A549 (cell line): ENCODE measurements at regions of chr5 and their contacts with region 1.

Region 1: GRCh38 chr5:43120720-43121564 is at the start of gene ZNF131:
- DNase-seq: peak; percentile 86 to 98
- ATAC-seq: peak; percentile 94 to 95
- H3K4me3 ChIP-seq: peak within 1 kb of the TSS; percentile 78
- H3K27ac ChIP-seq: peak within 1 kb of the TSS; percentile 96 to 97
- H3K4me1 ChIP-seq: peaks cover 20% of the 10 kb centered on the region; the same call in 2 of the 3 replicates
- CTCF ChIP-seq: no peak
- EP300 ChIP-seq: no peak
- POLR2A ChIP-seq: peak; percentile 80
- RAD21 ChIP-seq: no peak
- polyA plus RNA-seq, gene ZNF131: 37.5 and 47.9 TPM in 2 replicates

Region 2: GRCh38 chr5:42950440-42951292 is 170.3 kb before region 1 on chr5:
- CTCF ChIA-PET with region 1: no interaction called
- POLR2A ChIA-PET with region 1: interaction called, 16 read pairs
- DNase-seq: peak; percentile 97 to 99
- ATAC-seq: peak; percentile 93 to 94
- H3K4me3 ChIP-seq: peak overlapping the region; percentile 37
- H3K27ac ChIP-seq: peak overlapping the region; percentile 95 to 99
- H3K4me1 ChIP-seq: peaks cover 19% of the 10 kb centered on the region
- CTCF ChIP-seq: no peak
- EP300 ChIP-seq: peak; percentile 51 to 63; a peak in 2 of 5 replicates
- POLR2A ChIP-seq: no peak
- RAD21 ChIP-seq: 0 out of 5 replicates have a peak, but pooled peaks of 1 of the 2 experiments have one; percentile 27

Region 3: DNA sequence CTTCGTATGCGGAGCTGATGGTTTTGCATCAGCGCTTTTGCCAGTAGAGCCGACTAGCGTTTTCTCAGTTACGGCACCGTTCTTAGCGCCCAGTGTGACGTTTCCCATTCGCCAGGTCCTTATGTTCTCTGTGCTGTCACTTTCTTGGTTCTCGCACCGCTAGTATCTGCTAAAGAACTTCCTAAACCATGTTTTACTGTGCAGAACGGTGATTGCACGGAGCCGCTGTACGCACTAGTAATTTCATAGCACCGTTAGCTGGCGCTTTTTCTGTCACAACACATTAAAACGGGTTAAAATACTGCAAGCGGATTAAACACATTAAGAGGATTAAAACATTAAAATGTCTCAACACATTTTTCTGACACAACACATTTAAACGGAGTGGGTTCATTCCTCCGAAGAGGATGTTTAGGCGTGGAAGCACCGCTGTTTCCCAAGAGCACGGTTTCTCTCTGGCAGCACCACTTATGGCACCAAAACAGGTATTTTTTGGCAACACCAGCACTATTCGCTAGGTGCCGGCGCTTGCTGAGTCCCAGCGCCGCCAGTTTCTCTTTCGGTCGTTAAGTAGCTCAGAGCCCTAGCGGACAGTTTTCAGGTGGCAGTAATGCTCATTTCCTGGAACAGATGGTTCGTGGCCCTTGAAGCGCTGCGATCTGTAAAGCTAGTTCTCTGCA is 101.2 kb before region 1 on chr5:
- CTCF ChIA-PET with region 1: no interaction called
- POLR2A ChIA-PET with region 1: interaction called, 16 read pairs
- DNase-seq: peak; percentile 51 to 88
- ATAC-seq: peak; percentile 68
- H3K4me3 ChIP-seq: peak overlapping the region; percentile 55
- H3K27ac ChIP-seq: peak overlapping the region; percentile 90 to 96
- H3K4me1 ChIP-seq: peaks cover 24% of the 10 kb centered on the region
- CTCF ChIP-seq: no peak
- EP300 ChIP-seq: no peak
- POLR2A ChIP-seq: no peak
- RAD21 ChIP-seq: no peak

Region 4: GRCh38 chr5:43066799-43067741 is 53.9 kb before region 1 on chr5:
- CTCF ChIA-PET with region 1: no interaction called
- POLR2A ChIA-PET with region 1: interaction called, 14 read pairs
- DNase-seq: peak; percentile 59 to 93
- ATAC-seq: peak; percentile 69 to 78
- H3K4me3 ChIP-seq: peak overlapping the region; percentile 57
- H3K27ac ChIP-seq: peak overlapping the region; percentile 92 to 93
- H3K4me1 ChIP-seq: peaks cover 23% of the 10 kb centered on the region
- CTCF ChIP-seq: no peak
- EP300 ChIP-seq: no peak
- POLR2A ChIP-seq: no peak; the same call in none of the 2 replicates
- RAD21 ChIP-seq: no peak

Region 5: GRCh38 chr5:43140286-43140685 is 19.3 kb after region 1 on chr5:
- CTCF ChIA-PET with region 1: interaction called, 3 read pairs
- POLR2A ChIA-PET with region 1: interaction called, 10 read pairs
- DNase-seq: no peak
- ATAC-seq: no peak
- H3K4me3 ChIP-seq: no peak overlapping the region
- H3K27ac ChIP-seq: no peak overlapping the region
- H3K4me1 ChIP-seq: no peaks in the 10 kb centered on the region
- CTCF ChIP-seq: no peak
- EP300 ChIP-seq: no peak
- POLR2A ChIP-seq: no peak
- RAD21 ChIP-seq: no peak

Region 6: GRCh38 chr5:43274156-43275114 is 153.5 kb after region 1 on chr5:
- CTCF ChIA-PET with region 1: no interaction called
- POLR2A ChIA-PET with region 1: no interaction called
- DNase-seq: no peak
- ATAC-seq: no peak
- H3K4me3 ChIP-seq: no peak overlapping the region
- H3K27ac ChIP-seq: no peak overlapping the region
- H3K4me1 ChIP-seq: no peaks in the 10 kb centered on the region
- CTCF ChIP-seq: no peak
- EP300 ChIP-seq: no peak
- POLR2A ChIP-seq: no peak
- RAD21 ChIP-seq: no peak

Region 7: DNA sequence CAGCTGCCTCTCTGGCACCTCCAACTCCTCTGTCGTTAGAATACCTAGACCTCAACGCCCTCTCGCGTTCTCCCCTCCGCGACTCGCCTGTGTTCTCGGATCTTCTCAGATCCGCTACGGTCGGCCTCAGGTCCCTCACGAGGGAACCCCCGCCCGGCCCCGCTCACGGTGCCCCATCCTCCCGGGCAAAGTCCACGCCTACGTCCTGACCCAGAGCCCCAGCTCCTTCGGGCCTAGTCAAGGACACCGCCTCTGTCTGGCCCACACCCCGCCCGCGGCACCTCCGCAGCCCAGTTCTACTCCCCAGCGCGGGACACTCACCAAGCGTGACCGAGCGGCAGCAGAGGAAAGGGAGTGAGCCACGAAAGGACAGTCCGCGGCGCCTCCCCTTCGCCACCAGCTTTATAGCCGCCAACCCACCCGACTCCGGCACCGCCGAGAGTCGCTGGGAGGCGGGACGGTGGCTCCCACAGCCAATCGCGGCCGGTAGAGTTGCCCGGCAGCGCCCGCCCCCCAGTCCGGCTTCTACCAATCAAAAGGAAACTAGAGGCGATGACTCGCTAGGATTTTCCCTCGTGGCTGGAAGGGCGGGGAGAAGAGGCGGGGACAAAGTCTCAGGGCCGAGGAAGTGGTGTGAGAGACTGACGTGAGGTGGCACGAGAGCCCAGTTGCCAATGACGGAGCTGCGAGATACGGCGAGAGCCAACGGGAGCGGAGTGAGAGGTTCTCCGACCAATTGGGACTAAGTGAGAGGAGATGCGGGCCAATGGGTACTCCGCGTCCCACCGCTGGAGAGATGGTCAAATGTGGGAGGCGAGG is 192.3 kb after region 1 on chr5 and contains the start of gene HMGCS1:
- CTCF ChIA-PET with region 1: interaction called, 6 read pairs
- POLR2A ChIA-PET with region 1: interaction called, 25 read pairs
- DNase-seq: peak; percentile 98 to 100
- ATAC-seq: peak; percentile 95 to 96
- H3K4me3 ChIP-seq: peak within 1 kb of the TSS; percentile 88
- H3K27ac ChIP-seq: peak within 1 kb of the TSS; percentile 87 to 90
- H3K4me1 ChIP-seq: peaks cover 59% of the 10 kb centered on the region
- CTCF ChIP-seq: no peak
- EP300 ChIP-seq: no peak
- POLR2A ChIP-seq: peak; percentile 93
- RAD21 ChIP-seq: no peak
- polyA plus RNA-seq, gene HMGCS1: 54.1 and 72.8 TPM in 2 replicates